ENCODE measurements at regions of chr3 and their contacts with region 1.

Region 1: DNA sequence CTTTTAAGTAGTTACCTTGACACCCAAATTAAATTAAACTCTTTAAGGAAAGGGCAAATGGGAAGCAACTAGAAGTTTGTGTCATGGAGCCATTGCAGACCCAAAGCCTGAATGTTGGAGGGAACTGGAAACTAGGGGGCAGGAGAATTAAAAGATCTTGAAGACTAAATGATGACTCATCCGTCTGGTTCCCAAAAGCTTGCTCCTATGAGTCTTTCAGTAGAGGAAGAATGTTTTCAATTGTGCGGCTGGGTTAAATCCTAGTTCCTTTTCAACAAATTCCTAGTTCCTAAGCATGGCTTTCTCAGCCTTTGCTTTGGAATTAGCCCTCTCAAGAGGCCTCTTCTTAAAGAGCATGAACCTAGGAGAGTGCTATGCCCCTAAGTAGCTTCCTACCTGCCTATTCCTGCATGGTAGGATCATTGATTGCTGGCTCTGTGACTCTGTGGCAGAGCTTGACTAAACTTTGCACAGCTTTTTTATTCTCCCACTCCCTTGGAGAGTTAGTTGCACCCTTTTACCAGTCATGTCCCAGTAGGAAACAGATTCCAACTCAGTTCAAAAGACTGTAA is 17.7 kb downstream of the CLEC3B start:
- DNase-seq: no peak
- H3K4me3 Mint-ChIP-seq: no peak overlapping the region
- H3K27ac Mint-ChIP-seq: no peak overlapping the region
- H3K4me1 Mint-ChIP-seq: peaks cover 29% of the 10 kb centered on the region
- H3K27me3 Mint-ChIP-seq: peaks cover 33% of the 10 kb centered on the region

Region 2: DNA sequence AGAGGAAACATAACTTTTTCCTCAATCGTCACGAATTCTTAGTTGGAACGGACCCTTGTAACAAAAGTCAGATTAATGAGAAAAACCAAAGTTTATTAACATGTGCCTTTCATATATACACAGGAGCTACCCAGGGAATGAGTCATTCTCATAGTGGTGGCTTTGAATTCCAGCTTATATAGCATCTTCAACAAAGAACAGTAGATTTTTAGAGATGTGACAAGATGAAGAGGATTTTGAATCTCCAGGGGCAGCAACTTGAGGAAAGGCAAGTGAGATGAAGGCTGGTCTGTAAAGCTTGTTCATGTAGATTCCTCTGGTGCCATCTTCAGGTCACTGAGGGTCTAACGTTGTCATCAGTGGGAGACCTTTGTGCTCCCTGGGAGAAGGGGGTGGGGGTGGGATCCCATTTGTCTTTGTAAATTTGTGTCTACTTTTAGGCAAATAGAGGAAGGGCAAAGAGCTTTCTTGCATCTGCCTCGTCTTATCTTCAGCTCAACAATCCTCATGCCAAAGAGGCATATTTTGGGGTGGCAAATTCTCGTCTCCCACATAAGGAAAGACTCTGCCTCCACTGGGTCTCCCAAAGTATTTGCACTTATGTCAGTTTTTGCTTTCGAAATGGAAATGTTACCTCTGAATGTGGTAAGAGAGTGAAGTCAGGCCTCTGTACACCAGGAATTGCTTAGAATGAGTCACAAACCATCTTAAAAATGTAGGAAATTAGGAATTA is 11.8 kb after region 1 on chr3:
- CTCF ChIA-PET with region 1: interaction called, 24 read pairs
- POLR2A ChIA-PET with region 1: no interaction called
- DNase-seq: peak; percentile 47
- H3K4me3 Mint-ChIP-seq: no peak overlapping the region
- H3K27ac Mint-ChIP-seq: no peak overlapping the region
- H3K4me1 Mint-ChIP-seq: peaks cover 27% of the 10 kb centered on the region
- H3K27me3 Mint-ChIP-seq: peaks cover 2% of the 10 kb centered on the region

Region 3: GRCh38 chr3:45269952-45270351 is 226.1 kb after region 1 on chr3:
- CTCF ChIA-PET with region 1: no interaction called
- POLR2A ChIA-PET with region 1: no interaction called
- DNase-seq: no peak
- H3K4me3 Mint-ChIP-seq: no peak overlapping the region
- H3K27ac Mint-ChIP-seq: no peak overlapping the region
- H3K4me1 Mint-ChIP-seq: no peaks in the 10 kb centered on the region
- H3K27me3 Mint-ChIP-seq: peaks cover 5% of the 10 kb centered on the region